ENCODE measurements at regions of chr2 and their contacts with region 1.

Region 1: GRCh38 chr2:19863303-19864041 is 38.3 kb downstream of the TTC32 start:
- DNase-seq: no peak
- ATAC-seq: peak; percentile 91
- H3K4me3 ChIP-seq: no peak overlapping the region
- H3K27ac ChIP-seq: no peak overlapping the region
- H3K4me1 ChIP-seq: peaks cover 9% of the 10 kb centered on the region
- H3K27me3 ChIP-seq: no peaks in the 10 kb centered on the region; a peak in 1 of 4 replicates
- CTCF ChIP-seq: peak; percentile 83 to 98 (median 93)
- EP300 ChIP-seq: no peak
- POLR2A ChIP-seq: no peak
- RAD21 ChIP-seq: peak; percentile 81

Region 2: GRCh38 chr2:18520451-18521425 is 1342.7 kb before region 1 on chr2:
- CTCF ChIA-PET with region 1: interaction called, 22 read pairs
- POLR2A ChIA-PET with region 1: no interaction called
- RAD21 ChIA-PET with region 1: interaction called, 4 read pairs
- SMC1A ChIA-PET with region 1: no interaction called
- in situ Hi-C with region 1: loop called (anchors 5 kb)
- intact Hi-C with region 1: loop called (anchors 1 kb)
- DNase-seq: no peak
- ATAC-seq: peak; percentile 97
- H3K4me3 ChIP-seq: no peak overlapping the region
- H3K27ac ChIP-seq: no peak overlapping the region
- H3K4me1 ChIP-seq: no peaks in the 10 kb centered on the region
- H3K27me3 ChIP-seq: peaks cover 0 to 2% of the 10 kb centered on the region in 2 experiments; a peak in 2 of 4 replicates
- CTCF ChIP-seq: peak; percentile 80 to 84 (median 84)
- EP300 ChIP-seq: no peak
- POLR2A ChIP-seq: no peak
- RAD21 ChIP-seq: peak; percentile 94

Region 3: GRCh38 chr2:18883616-18884456 is 979.6 kb before region 1 on chr2:
- CTCF ChIA-PET with region 1: no interaction called
- POLR2A ChIA-PET with region 1: no interaction called
- RAD21 ChIA-PET with region 1: interaction called, 3 read pairs
- SMC1A ChIA-PET with region 1: no interaction called
- in situ Hi-C with region 1: no loop called
- intact Hi-C with region 1: loop called (anchors 5 kb)
- DNase-seq: no peak
- ATAC-seq: peak; percentile 55; the same call in 1 of the 3 replicates
- H3K4me3 ChIP-seq: no peak overlapping the region
- H3K27ac ChIP-seq: no peak overlapping the region
- H3K4me1 ChIP-seq: no peaks in the 10 kb centered on the region
- H3K27me3 ChIP-seq: no peaks in the 10 kb centered on the region
- CTCF ChIP-seq: peak; percentile 36 to 45 (median 38); a peak in 4 of 6 replicates
- EP300 ChIP-seq: no peak
- POLR2A ChIP-seq: no peak
- RAD21 ChIP-seq: peak; percentile 50; the same call in 1 of the 2 replicates

Region 4: DNA sequence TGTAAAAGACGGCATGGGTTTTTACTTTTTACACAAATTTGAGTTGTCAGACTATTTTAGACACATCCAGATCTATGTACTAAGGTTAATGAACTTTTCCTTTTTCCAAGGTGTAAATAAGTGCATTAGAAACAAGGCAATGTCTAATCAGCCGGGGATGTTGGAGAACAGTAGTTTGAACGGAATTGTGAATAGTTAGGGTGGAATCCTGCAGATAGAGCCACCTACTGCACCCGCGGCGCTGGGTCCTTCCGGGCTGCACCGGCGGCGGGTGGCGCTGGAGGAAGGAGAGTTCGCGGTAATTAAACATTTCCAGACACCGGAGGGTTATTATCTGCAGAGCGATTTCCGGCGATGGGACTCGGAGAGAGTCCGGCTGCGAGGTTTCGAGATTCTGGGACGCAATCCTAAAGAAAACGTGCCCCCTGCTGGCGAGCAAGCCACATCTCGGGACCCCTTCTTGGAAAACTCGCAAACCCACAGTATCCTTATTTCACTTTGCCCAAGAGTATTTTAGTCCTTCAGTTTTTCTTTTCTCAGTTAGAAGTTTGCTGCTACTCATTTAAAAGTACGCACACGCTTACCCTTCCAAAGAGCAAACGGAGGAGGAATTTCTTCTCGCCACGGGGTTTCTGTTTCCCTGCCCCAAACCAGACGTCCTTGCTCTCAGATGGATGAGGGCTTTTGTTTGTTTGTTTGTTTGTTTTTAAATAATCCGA is 500.6 kb before region 1 on chr2:
- CTCF ChIA-PET with region 1: no interaction called
- POLR2A ChIA-PET with region 1: no interaction called
- RAD21 ChIA-PET with region 1: no interaction called
- SMC1A ChIA-PET with region 1: no interaction called
- in situ Hi-C with region 1: no loop called
- intact Hi-C with region 1: loop called (anchors 5 kb)
- DNase-seq: no peak
- ATAC-seq: peak; percentile 78
- H3K4me3 ChIP-seq: peak overlapping the region; percentile 64
- H3K27ac ChIP-seq: no peak overlapping the region
- H3K4me1 ChIP-seq: peaks cover 6% of the 10 kb centered on the region; the same call in 1 of the 2 replicates
- H3K27me3 ChIP-seq: peaks cover 20 to 51% of the 10 kb centered on the region in 2 experiments
- CTCF ChIP-seq: peak; percentile 51 to 68 (median 62); a peak in 5 of 6 replicates
- EP300 ChIP-seq: no peak
- POLR2A ChIP-seq: no peak
- RAD21 ChIP-seq: peak; percentile 60

Region 5: DNA sequence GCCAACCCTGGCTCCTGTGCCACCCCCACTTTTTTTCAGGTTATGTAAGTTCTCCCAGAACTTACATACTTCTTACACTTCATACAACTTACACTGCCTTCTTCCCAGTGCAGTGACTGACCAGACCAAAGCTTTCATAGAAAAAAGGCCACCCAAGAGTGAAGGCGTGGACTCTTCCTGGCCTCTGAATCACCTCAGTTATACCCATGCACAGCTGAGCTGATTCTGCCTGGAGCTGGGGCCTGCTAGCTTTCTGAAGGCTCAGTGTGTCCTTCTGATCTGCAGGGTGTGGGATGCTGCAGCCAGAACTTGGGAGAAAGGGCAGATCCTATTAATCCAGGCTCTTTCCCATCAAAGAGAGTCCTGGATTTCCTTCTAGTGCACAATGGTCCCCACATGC is 177.7 kb before region 1 on chr2:
- CTCF ChIA-PET with region 1: interaction called, 4 read pairs
- POLR2A ChIA-PET with region 1: no interaction called
- RAD21 ChIA-PET with region 1: interaction called, 3 read pairs
- SMC1A ChIA-PET with region 1: no interaction called
- in situ Hi-C with region 1: no loop called
- intact Hi-C with region 1: loop called (anchors 5 kb)
- DNase-seq: no peak
- ATAC-seq: no peak
- H3K4me3 ChIP-seq: no peak overlapping the region
- H3K27ac ChIP-seq: no peak overlapping the region
- H3K4me1 ChIP-seq: no peaks in the 10 kb centered on the region
- H3K27me3 ChIP-seq: no peaks in the 10 kb centered on the region; a peak in 1 of 4 replicates
- CTCF ChIP-seq: no peak
- EP300 ChIP-seq: no peak
- POLR2A ChIP-seq: no peak
- RAD21 ChIP-seq: no peak

Region 6: GRCh38 chr2:19786408-19787058 is 76.9 kb before region 1 on chr2:
- CTCF ChIA-PET with region 1: no interaction called
- POLR2A ChIA-PET with region 1: no interaction called
- RAD21 ChIA-PET with region 1: no interaction called
- SMC1A ChIA-PET with region 1: no interaction called
- in situ Hi-C with region 1: no loop called
- intact Hi-C with region 1: no loop called
- DNase-seq: no peak
- ATAC-seq: peak; percentile 63
- H3K4me3 ChIP-seq: no peak overlapping the region
- H3K27ac ChIP-seq: no peak overlapping the region
- H3K4me1 ChIP-seq: no peaks in the 10 kb centered on the region; the same call in 1 of the 2 replicates
- H3K27me3 ChIP-seq: no peaks in the 10 kb centered on the region; a peak in 1 of 4 replicates
- CTCF ChIP-seq: no peak
- EP300 ChIP-seq: no peak
- POLR2A ChIP-seq: no peak
- RAD21 ChIP-seq: no peak

Measured in GM12878 (cell line).